Activated CD8-positive, alpha-beta memory T cell treated with anti-CD3 and anti-CD28 coated beads, Interleukin-2, amount 10 ng/mL, durations not matched to agents 7 days and 5 days (primary cell): ENCODE measurements at regions of chr10 and their contacts with region 1.

Region 1: GRCh38 chr10:100562008-100562711 is 26.4 kb downstream of the HIF1AN start:
- DNase-seq: peak; percentile 83
- ATAC-seq: peak; percentile 94
- H3K4me3 Mint-ChIP-seq: no peak overlapping the region
- H3K27ac Mint-ChIP-seq: no peak overlapping the region
- H3K4me1 Mint-ChIP-seq: peaks cover 21% of the 10 kb centered on the region
- H3K27me3 Mint-ChIP-seq: peaks cover 36% of the 10 kb centered on the region

Region 2: GRCh38 chr10:100551196-100551595 is 11.0 kb before region 1 on chr10:
- CTCF ChIA-PET with region 1: interaction called, 17 read pairs
- DNase-seq: no peak
- ATAC-seq: no peak
- H3K4me3 Mint-ChIP-seq: no peak overlapping the region
- H3K27ac Mint-ChIP-seq: no peak overlapping the region
- H3K4me1 Mint-ChIP-seq: peaks cover 3% of the 10 kb centered on the region
- H3K27me3 Mint-ChIP-seq: no peaks in the 10 kb centered on the region

Region 3: DNA sequence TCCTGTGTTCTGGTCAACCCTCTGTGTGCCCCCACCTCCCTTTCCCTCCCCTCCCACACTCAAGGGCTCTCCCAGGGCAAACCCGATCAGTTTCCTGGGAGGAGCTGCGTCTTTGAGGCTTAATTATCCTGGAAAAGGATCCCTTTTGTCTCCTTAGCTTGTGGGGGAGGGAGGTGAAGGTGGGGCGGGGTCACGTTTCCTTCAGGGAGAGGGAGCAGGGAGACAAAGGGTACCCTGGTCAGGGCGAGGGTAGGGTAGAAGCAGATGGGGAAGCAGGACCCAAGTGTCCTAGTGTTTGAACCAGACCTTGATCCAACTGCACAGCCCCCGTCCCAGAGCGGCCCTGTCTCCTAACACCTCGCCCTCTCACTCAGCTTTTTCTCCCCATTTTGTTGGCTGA is 63.7 kb after region 1 on chr10:
- CTCF ChIA-PET with region 1: no interaction called
- DNase-seq: no peak
- ATAC-seq: no peak
- H3K4me3 Mint-ChIP-seq: no peak overlapping the region
- H3K27ac Mint-ChIP-seq: no peak overlapping the region
- H3K4me1 Mint-ChIP-seq: peaks cover 2% of the 10 kb centered on the region
- H3K27me3 Mint-ChIP-seq: peaks cover 43% of the 10 kb centered on the region

Region 4: DNA sequence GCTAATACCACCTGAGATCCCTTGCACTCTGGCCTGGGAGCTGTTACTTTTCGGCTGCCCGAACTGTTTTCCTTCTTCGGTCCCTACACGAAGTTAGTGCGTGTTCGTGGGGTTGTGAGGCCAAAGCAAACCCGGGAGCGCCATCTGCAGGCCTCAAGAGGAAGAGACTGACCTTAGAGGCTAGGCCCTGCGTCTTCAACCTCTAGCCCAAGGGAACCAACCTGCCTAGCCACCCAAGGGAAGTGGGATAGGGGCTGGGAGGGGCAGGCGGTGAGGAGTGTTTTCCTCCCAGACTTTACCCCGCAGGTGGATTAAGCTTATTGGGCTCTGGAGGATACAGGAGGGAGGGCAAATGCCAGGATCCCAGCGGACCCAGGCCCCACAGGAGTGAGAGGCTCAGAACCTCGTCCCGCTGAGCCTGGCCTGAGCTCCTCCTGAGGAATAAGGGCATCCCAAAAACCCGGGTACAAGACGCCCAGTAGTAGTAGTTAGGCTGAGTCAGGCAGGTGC is 181.5 kb after region 1 on chr10:
- CTCF ChIA-PET with region 1: interaction called, 50 read pairs
- DNase-seq: peak; percentile 65
- ATAC-seq: peak; percentile 78
- H3K4me3 Mint-ChIP-seq: no peak overlapping the region
- H3K27ac Mint-ChIP-seq: peak overlapping the region; percentile 24
- H3K4me1 Mint-ChIP-seq: peaks cover 19% of the 10 kb centered on the region
- H3K27me3 Mint-ChIP-seq: peaks cover 88% of the 10 kb centered on the region

Region 5: GRCh38 chr10:100878291-100878910 is 316.2 kb after region 1 on chr10:
- CTCF ChIA-PET with region 1: interaction called, 10 read pairs
- DNase-seq: peak; percentile 53
- ATAC-seq: peak; percentile 74
- H3K4me3 Mint-ChIP-seq: no peak overlapping the region
- H3K27ac Mint-ChIP-seq: no peak overlapping the region
- H3K4me1 Mint-ChIP-seq: no peaks in the 10 kb centered on the region
- H3K27me3 Mint-ChIP-seq: no peaks in the 10 kb centered on the region

Region 6: DNA sequence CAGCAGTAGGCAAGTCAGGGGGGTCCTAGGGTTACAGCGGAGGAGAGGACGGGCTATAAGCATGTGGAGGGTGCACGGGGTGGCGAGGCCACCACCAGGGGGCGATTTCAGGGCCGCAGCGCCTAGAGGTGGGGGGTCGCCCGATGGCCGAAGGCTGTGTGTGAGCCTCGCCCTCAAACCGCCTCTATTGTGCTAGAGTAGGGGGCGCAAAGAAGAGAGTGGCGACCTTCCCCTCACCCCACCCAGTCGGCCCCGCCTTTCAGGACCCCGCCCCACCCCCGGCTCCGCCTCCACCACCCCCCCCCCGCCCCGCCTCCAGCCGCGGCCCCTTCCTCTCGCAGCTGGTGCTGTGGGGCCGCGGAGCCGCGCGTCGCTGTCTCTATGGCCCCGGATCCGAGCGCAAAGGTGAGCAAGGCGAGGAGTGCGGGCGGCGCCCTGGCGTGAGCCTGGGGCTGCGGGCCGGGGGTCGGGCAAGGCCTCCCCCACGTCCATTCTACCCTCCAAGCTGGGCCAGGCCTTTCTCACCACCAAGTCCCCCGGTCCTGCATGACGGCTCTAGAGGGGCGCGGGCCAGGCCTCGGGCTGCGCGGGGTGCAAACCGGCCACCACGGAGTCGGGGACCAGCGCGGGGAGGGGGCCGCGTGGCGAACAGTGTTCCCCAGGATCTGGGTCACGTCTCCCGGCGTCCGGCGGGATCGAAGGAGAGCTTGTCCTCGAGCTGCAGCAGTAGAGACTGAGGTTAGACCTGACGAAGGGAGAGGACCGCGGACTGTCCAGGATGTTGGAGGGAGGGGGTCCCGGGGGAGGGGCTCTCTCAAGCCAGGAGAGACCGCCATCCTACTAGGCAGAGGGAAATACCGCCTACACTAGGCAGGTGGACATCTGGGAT is 407.3 kb after region 1 on chr10 and contains the start of gene SEMA4G:
- CTCF ChIA-PET with region 1: no interaction called
- DNase-seq: no peak
- ATAC-seq: peak; percentile 80
- H3K4me3 Mint-ChIP-seq: peak within 1 kb of the TSS; percentile 27
- H3K27ac Mint-ChIP-seq: peak within 1 kb of the TSS; percentile 35
- H3K4me1 Mint-ChIP-seq: peaks cover 7% of the 10 kb centered on the region
- H3K27me3 Mint-ChIP-seq: no peaks in the 10 kb centered on the region
- total RNA-seq, gene SEMA4G: 0.26 to 0.45 TPM